Caco-2 (cell line): ENCODE measurements at regions of chrX and their contacts with region 1.

Region 1: DNA sequence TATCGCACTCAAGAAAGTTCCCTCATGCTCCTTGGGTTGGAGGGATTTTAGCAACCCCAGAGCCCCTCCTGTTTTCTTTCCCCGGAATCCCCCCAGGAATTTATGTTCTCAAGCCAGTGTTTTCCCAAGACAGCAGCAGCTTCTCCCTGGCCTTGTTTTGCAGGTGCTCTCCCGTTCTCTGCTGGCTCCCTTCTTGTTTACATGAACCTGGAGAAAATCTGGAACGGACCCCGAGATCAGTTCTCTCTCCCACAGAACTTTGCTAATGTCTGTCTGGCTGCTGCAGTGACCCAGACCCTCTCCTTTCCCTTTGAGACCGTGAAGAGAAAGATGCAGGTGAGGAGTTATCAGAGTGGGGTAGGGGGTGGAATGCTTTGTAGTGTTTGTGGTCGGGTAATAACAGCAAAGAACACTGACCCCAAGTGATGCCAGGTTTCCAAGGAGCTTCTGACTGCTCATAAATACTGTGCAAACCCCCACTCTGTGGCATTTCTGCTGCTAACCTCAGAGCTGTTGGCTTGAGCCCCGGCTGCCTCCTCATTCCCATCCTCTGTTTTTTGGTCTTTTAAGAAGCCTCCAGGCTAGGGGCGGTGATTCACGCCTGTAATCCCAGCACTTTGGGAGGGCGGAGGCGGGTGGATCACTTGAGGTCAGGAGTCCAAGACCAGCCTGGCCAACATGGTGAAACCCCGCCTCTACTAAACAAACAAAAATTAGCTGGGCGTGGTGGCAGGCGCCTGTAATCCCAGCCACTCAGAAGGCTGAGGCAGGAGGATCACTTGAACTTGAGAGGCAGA is 11.1 kb downstream of the SLC25A43 start:
- DNase-seq: peak; percentile 83 to 87
- H3K4me3 ChIP-seq: no peak overlapping the region
- H3K4me3 Mint-ChIP-seq: peak overlapping the region; percentile 66
- H3K27ac Mint-ChIP-seq: peak overlapping the region; percentile 87
- H3K4me1 ChIP-seq: peaks cover 21% of the 10 kb centered on the region
- H3K4me1 Mint-ChIP-seq: peaks cover 12% of the 10 kb centered on the region
- H3K27me3 ChIP-seq: no peaks in the 10 kb centered on the region
- H3K27me3 Mint-ChIP-seq: no peaks in the 10 kb centered on the region
- CTCF ChIP-seq: no peak

Region 2: GRCh38 chrX:119292445-119292844 is 117.8 kb before region 1 on chrX:
- CTCF ChIA-PET with region 1: no interaction called
- POLR2A ChIA-PET with region 1: no interaction called
- intact Hi-C with region 1: loop called (anchors 10 kb)
- DNase-seq: no peak
- H3K4me3 ChIP-seq: no peak overlapping the region
- H3K4me3 Mint-ChIP-seq: no peak overlapping the region
- H3K27ac Mint-ChIP-seq: no peak overlapping the region
- H3K4me1 ChIP-seq: 0 out of 2 replicates have a peak, but pooled peaks cover 6% of the 10 kb centered on the region
- H3K4me1 Mint-ChIP-seq: peaks cover 13% of the 10 kb centered on the region
- H3K27me3 ChIP-seq: no peaks in the 10 kb centered on the region
- H3K27me3 Mint-ChIP-seq: peaks cover 4% of the 10 kb centered on the region
- CTCF ChIP-seq: peak in 1 of 2 experiments; percentile 29

Region 3: GRCh38 chrX:119389871-119390501 is 20.2 kb before region 1 on chrX:
- CTCF ChIA-PET with region 1: no interaction called
- POLR2A ChIA-PET with region 1: no interaction called
- intact Hi-C with region 1: loop called (anchors 1 kb)
- DNase-seq: peak in 1 of 2 experiments; percentile 7
- H3K4me3 ChIP-seq: peak overlapping the region; percentile 24
- H3K4me3 Mint-ChIP-seq: peak overlapping the region; percentile 61
- H3K27ac Mint-ChIP-seq: peak overlapping the region; percentile 33
- H3K4me1 ChIP-seq: peaks cover 23% of the 10 kb centered on the region
- H3K4me1 Mint-ChIP-seq: peaks cover 18% of the 10 kb centered on the region
- H3K27me3 ChIP-seq: no peaks in the 10 kb centered on the region
- H3K27me3 Mint-ChIP-seq: no peaks in the 10 kb centered on the region
- CTCF ChIP-seq: peak in 1 of 2 experiments; percentile 16

Region 4: GRCh38 chrX:119398974-119399771 is 11.1 kb before region 1 on chrX and contains the start of gene SLC25A43:
- CTCF ChIA-PET with region 1: no interaction called
- POLR2A ChIA-PET with region 1: interaction called, 7 read pairs
- intact Hi-C with region 1: loop called (anchors 1 kb)
- DNase-seq: peak; percentile 38 to 62
- H3K4me3 ChIP-seq: peak within 1 kb of the TSS; percentile 77
- H3K4me3 Mint-ChIP-seq: peak within 1 kb of the TSS; percentile 85
- H3K27ac Mint-ChIP-seq: peak within 1 kb of the TSS; percentile 82
- H3K4me1 ChIP-seq: no peaks in the 10 kb centered on the region
- H3K4me1 Mint-ChIP-seq: peaks cover 9% of the 10 kb centered on the region
- H3K27me3 ChIP-seq: no peaks in the 10 kb centered on the region
- H3K27me3 Mint-ChIP-seq: no peaks in the 10 kb centered on the region
- CTCF ChIP-seq: no peak
- total RNA-seq, gene SLC25A43: 13.4 and 14.4 TPM in 2 replicates

Region 5: GRCh38 chrX:119442286-119442685 is 32.1 kb after region 1 on chrX:
- CTCF ChIA-PET with region 1: no interaction called
- POLR2A ChIA-PET with region 1: interaction called, 23 read pairs
- intact Hi-C with region 1: no loop called
- DNase-seq: no peak
- H3K4me3 ChIP-seq: no peak overlapping the region
- H3K4me3 Mint-ChIP-seq: no peak overlapping the region
- H3K27ac Mint-ChIP-seq: no peak overlapping the region
- H3K4me1 ChIP-seq: no peaks in the 10 kb centered on the region
- H3K4me1 Mint-ChIP-seq: no peaks in the 10 kb centered on the region
- H3K27me3 ChIP-seq: no peaks in the 10 kb centered on the region
- H3K27me3 Mint-ChIP-seq: no peaks in the 10 kb centered on the region
- CTCF ChIP-seq: no peak